Esophagus squamous epithelium (tissue), 5 donors: ENCODE measurements at regions of chr16 and their contacts with region 1.

Region 1: GRCh38 chr16:49785970-49786369 is 69.9 kb downstream of the ZNF423 start:
- DNase-seq: no peak
- H3K4me3 ChIP-seq: no peak overlapping the region
- H3K27ac ChIP-seq: peak overlapping the region in 1 of 4 donors; percentile 22
- H3K4me1 ChIP-seq: peaks cover 0 to 19% (median 0%) of the 10 kb centered on the region in 3 donors
- H3K27me3 ChIP-seq: no peaks in the 10 kb centered on the region
- CTCF ChIP-seq: no peak
- POLR2A ChIP-seq: no peak

Region 2: DNA sequence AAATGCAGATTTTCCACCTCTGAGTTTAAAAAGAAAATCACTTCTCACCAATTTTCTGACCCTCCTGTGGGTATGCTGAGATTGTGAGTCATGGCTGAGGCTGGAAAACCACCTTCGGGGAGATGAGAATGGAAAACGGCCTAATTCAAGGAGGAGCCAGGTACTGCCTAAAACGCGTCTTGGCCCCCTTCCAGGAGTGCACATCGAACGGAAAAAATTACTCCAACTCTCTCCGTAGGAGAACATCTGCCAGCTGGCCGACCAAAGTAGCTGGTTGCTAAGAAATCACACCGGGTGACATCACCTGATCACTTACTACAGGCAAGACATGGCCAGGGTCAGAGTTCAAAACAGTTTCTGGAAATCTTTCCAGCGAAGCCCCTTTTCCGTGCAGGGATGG is 37.6 kb before region 1 on chr16:
- intact Hi-C with region 1: no loop called
- DNase-seq: no peak
- H3K4me3 ChIP-seq: no peak overlapping the region
- H3K27ac ChIP-seq: no peak overlapping the region
- H3K4me1 ChIP-seq: peaks cover 0 to 15% (median 4%) of the 10 kb centered on the region in 3 donors
- H3K27me3 ChIP-seq: peaks cover 0 to 5% (median 0%) of the 10 kb centered on the region in 4 donors
- CTCF ChIP-seq: no peak
- POLR2A ChIP-seq: no peak

Region 3: GRCh38 chr16:49760815-49761214 is 25.2 kb before region 1 on chr16:
- intact Hi-C with region 1: loop called (anchors 2 kb)
- DNase-seq: no peak
- H3K4me3 ChIP-seq: no peak overlapping the region
- H3K27ac ChIP-seq: no peak overlapping the region
- H3K4me1 ChIP-seq: peaks cover 0 to 8% (median under 1%) of the 10 kb centered on the region in 3 donors
- H3K27me3 ChIP-seq: no peaks in the 10 kb centered on the region
- CTCF ChIP-seq: no peak
- POLR2A ChIP-seq: no peak